ENCODE measurements at regions of chr6 and their contacts with region 1.

Region 1: DNA sequence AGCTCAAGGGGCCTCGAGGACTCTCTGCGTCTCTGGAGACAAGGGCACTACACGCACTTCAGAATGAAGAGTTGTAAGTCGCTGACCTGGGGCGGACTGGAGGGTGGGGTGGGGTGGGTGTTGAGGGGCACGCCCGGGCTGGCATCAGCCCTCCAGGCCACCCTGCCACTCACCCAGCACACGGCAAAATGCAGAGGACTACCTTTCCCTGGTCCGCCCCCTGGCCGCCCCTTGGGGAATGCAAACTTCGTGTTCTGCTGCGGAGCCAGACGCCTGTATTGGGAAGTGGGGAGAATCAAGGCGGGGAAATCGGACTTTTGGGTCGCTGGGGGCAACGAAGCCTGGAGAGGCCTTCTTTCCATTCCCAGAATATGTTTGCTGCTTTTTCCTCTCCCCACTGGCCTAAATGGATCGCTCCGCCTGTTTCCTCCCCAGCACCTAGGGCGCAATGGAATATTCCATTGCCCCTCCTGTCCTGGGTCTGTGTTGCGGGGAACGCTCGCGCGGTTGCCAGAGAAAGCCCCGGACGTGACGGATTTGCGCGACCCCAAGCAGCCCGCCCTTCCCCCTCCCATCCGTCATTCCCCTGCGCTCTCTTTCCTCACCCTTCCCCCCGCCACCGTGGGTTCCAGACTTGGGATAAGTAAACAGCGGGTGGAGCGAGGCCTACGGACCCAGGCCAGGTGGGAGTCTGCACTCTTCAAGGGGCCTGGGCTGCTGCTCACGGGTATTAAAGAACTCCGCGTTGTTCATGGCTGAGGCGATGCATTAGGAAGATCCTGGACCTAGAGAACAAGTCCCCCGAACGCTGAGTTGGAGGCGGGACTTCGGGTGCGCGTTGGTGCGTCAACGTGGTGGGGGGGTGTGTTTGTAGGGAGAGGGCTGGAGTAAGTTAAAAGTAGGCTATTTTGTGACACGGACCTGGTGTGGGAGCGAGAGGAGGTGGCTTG is at the start of gene PPT2:
- DNase-seq: peak; percentile 94 to 97
- H3K4me3 ChIP-seq: peak within 1 kb of the TSS; percentile 67 to 81
- H3K27ac ChIP-seq: peak within 1 kb of the TSS; percentile 92 to 98
- H3K4me1 ChIP-seq: peaks cover 0 to 49% (median 39%) of the 10 kb centered on the region in 4 donors
- H3K27me3 ChIP-seq: no peaks in the 10 kb centered on the region
- CTCF ChIP-seq: peak in 1 of 2 experiments; percentile 18

Region 2: GRCh38 chr6:32087574-32088486 is 66.0 kb before region 1 on chr6:
- intact Hi-C with region 1: loop called (anchors 5 kb)
- DNase-seq: peak; percentile 85 to 95
- H3K4me3 ChIP-seq: peak overlapping the region; percentile 38 to 44
- H3K27ac ChIP-seq: peak overlapping the region; percentile 85 to 87
- H3K4me1 ChIP-seq: peaks cover 0 to 44% (median 32%) of the 10 kb centered on the region in 4 donors
- H3K27me3 ChIP-seq: no peaks in the 10 kb centered on the region
- CTCF ChIP-seq: peak; percentile 57 to 69

Region 3: DNA sequence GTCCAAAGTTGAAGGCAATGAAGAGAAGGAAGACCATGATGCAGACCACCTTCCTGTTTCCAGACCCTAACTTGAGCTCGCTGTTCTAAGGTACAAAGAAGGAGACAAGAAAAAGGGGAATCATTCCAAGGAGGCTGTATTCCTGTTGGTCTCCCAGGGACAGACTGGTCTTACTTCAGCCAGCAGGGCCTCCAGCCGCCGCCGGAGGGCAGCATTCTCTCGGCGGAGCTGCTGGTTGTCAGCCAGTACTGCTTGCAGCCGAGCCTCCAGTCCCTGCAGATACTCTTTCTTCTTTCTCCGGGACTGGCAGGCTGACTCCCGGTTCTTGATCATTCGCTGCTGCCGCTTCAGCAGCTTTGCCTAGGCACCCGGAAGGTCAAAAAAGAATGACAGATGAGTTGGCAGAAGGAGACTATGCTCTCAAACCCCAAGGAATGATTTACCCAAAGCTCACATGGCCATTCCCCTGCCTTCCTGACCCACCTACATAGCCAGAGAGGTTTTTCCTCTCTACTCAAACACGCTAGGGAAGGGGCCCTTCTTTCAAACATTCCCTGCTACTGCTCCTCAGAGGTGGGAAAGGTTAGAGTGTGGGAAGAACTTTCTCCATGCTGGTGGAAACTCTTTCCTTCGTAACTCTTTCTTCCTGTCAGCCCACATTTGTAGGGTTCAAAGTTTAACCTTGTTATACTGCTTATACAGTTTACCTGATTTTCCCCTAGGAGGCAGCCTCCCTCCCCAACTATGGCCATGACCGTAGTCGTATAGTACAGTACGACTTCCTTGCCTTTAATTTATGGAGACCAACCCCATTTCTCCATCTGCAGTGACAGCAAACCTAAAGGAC is 34.8 kb before region 1 on chr6:
- intact Hi-C with region 1: loop called (anchors 2 kb)
- DNase-seq: peak; percentile 82 to 93
- H3K4me3 ChIP-seq: no peak overlapping the region
- H3K27ac ChIP-seq: peak overlapping the region; percentile 37 to 68
- H3K4me1 ChIP-seq: peaks cover 0 to 14% (median 8%) of the 10 kb centered on the region in 4 donors
- H3K27me3 ChIP-seq: no peaks in the 10 kb centered on the region
- CTCF ChIP-seq: peak; percentile 91 to 93

Region 4: DNA sequence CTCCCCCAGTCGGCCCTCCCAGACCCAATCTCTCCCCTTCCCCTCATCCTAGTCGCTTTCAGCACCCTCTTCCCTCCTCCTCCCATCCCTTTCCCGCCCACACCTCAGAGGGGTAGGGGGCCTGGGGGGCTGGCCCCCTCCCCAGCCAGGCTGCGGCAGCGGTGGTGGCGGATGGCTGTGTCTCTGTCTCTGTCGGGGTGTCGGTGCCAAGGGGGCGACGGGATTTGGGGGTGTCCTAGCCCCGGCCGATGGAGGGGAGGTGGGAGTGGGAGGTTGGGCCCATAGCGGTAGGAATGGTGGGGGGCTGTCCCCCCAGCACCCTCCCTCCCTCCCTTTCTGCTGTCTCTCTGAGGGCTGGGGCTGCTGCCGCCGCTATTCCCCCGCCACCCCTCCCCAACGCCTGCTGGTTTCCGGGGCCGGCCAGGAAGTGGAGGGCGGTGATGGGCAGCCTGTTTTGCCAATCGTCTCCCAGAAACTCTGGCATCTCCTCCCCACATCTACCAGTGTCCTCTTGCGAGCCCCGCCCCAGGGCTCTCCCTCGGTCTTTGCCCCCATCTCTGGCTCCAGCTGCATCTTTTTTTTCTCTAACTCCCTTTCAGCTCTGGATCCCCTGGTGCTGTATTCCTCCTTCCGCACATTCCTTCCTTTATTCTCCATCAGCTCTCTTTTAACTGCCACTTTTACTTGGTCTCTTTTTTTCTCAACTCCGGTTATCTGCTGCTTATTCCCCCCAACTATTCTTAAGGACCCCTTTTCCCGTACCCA is 22.1 kb after region 1 on chr6 and contains the start of gene AGPAT1:
- intact Hi-C with region 1: loop called (anchors 2 kb)
- DNase-seq: peak; percentile 96 to 99
- H3K4me3 ChIP-seq: peak within 1 kb of the TSS; percentile 80 to 95
- H3K27ac ChIP-seq: peak within 1 kb of the TSS; percentile 95 to 96
- H3K4me1 ChIP-seq: peaks cover 0 to 49% (median 36%) of the 10 kb centered on the region in 4 donors
- H3K27me3 ChIP-seq: no peaks in the 10 kb centered on the region
- CTCF ChIP-seq: no peak

Measured in tibial artery (tissue), 4 donors.